Heart left ventricle (tissue), 16 donors: ENCODE measurements at regions of chr4 and their contacts with region 1.

Region 1: GRCh38 chr4:110005461-110006056 is 92.9 kb downstream of the EGF start:
- DNase-seq: no peak
- ATAC-seq: peak in 1 of 4 donors; percentile 61
- H3K4me3 ChIP-seq: no peak overlapping the region
- H3K27ac ChIP-seq: no peak overlapping the region
- H3K4me1 ChIP-seq: peaks cover 0 to 6% (median 0%) of the 10 kb centered on the region in 12 donors
- H3K27me3 ChIP-seq: peaks cover 0 to 5% (median 0%) of the 10 kb centered on the region in 9 donors
- CTCF ChIP-seq: peak; percentile 45 to 77 (median 62)
- POLR2A ChIP-seq: no peak

Region 2: GRCh38 chr4:109850601-109851000 is 155.0 kb before region 1 on chr4:
- intact Hi-C with region 1: no loop called
- DNase-seq: no peak
- ATAC-seq: no peak
- H3K4me3 ChIP-seq: no peak overlapping the region
- H3K27ac ChIP-seq: no peak overlapping the region
- H3K4me1 ChIP-seq: no peaks in the 10 kb centered on the region
- H3K27me3 ChIP-seq: no peaks in the 10 kb centered on the region
- CTCF ChIP-seq: no peak
- POLR2A ChIP-seq: no peak

Region 3: DNA sequence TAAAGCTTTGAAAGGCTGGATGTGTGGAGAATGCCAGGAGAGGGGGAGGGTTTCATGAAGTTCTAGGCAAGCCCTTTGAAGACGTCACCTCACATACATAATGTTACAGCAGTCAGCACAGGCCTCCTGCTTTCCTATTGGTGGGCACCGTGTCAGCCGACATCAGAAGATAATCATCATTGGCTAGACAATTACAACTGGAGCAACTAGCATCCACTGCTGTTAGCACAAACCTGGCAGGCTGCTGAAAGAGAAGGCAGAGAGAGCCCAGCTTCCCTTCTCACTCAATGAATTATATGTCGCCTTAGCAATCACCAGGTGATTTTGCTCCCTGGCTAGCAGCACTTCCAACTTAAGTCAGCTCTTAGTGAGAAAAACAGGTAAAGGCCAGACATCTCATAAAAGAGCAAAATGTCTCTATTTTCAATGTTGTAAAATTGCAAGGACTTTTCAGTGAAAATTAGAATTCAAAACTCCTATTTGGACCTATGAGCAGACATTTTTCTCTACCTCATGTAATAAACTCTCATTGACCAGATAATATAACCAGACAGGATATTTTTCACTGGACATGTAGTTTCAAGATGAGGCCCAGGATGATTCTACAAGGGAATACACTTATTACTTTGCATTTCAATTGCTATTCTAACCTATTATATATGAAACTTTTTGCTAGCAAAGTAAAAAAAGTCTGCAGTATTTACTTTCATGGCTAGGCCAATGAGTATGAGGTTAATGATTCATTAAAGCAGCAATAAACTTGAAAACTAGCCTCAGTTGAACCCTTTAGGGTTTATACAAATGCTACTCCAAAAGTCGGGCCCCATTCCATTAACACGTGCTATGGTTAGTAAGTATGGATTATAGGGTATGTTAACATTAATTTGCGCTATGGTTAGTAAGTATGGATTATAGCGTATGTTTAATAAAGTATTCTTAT is 188.5 kb after region 1 on chr4:
- intact Hi-C with region 1: loop called in 1 of 10 experiments (anchors 5 kb)
- DNase-seq: peak in 4 of 5 donors; percentile 44 to 61 (median 50)
- ATAC-seq: peak in 3 of 4 donors; percentile 14 to 42 (median 29)
- H3K4me3 ChIP-seq: no peak overlapping the region
- H3K27ac ChIP-seq: no peak overlapping the region
- H3K4me1 ChIP-seq: peaks cover 0 to 26% (median 4%) of the 10 kb centered on the region in 12 donors
- H3K27me3 ChIP-seq: no peaks in the 10 kb centered on the region
- CTCF ChIP-seq: no peak
- POLR2A ChIP-seq: no peak

Region 4: DNA sequence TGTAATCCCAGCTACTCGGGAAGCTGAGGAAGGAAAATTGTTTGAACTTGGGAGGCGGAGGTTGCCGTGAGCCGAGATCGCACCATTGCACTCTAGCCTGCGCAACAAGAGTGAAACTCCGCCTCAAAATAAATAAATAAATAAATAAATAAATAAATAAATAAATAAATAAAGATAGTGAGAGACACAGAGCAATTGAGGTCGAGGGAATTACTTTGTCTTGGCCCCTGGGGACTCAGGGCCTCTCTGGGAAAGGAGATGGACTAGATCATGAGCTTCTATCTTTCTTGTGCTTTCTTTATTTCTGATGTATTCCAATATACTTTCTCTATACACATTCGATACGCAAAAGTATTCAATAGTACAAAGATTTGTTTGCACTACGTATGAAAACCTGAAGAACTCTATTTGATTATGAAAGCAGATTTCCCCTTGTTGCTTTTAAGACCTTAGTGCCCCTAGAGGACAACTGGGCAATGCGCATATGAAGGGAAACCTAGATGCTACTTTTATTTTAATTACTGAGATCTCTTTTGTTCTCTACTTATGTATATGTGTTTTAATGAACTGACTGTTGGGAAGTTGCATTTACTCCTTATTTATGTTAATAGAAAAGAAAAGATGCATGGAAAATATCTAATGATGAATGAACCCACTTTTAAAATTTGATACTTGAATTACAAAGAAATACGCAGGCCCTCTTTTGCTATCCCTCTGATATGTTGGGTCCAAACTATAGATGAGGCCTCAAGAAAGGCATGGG is 205.6 kb after region 1 on chr4:
- intact Hi-C with region 1: loop called in 1 of 10 experiments (anchors 5 kb)
- DNase-seq: no peak
- ATAC-seq: peak in 1 of 4 donors; percentile 53
- H3K4me3 ChIP-seq: peak overlapping the region in 2 of 12 donors; percentile 34 to 37
- H3K27ac ChIP-seq: no peak overlapping the region
- H3K4me1 ChIP-seq: no peaks in the 10 kb centered on the region
- H3K27me3 ChIP-seq: no peaks in the 10 kb centered on the region
- CTCF ChIP-seq: peak; percentile 51 to 92 (median 72)
- POLR2A ChIP-seq: no peak

Region 5: GRCh38 chr4:110275871-110276270 is 270.3 kb after region 1 on chr4:
- intact Hi-C with region 1: no loop called
- DNase-seq: no peak
- ATAC-seq: no peak
- H3K4me3 ChIP-seq: no peak overlapping the region
- H3K27ac ChIP-seq: no peak overlapping the region
- H3K4me1 ChIP-seq: no peaks in the 10 kb centered on the region
- H3K27me3 ChIP-seq: no peaks in the 10 kb centered on the region
- CTCF ChIP-seq: no peak
- POLR2A ChIP-seq: no peak

Region 6: DNA sequence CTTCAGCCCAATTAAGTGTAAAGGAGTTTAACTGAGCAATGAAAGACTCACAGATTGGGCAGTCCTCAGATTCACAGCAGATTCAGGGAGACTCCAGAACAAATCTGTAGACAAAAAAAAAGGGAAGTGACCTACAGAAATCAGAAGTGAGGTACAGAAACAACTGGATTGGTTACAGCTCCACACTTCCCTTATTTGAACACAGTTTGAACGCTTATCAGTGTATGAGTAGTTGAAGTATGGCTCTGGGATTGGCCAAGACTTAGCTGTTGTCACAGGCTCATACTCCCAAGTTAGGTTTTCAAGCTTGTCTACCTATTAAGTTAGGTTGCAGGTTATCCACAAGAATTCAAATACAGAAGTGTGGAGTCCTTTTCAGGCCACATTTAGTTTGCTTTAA is 305.2 kb after region 1 on chr4:
- intact Hi-C with region 1: loop called in 2 of 10 experiments (anchors 10 kb)
- DNase-seq: no peak
- ATAC-seq: no peak
- H3K4me3 ChIP-seq: no peak overlapping the region
- H3K27ac ChIP-seq: no peak overlapping the region
- H3K4me1 ChIP-seq: peaks cover 0 to 10% (median 0%) of the 10 kb centered on the region in 12 donors
- H3K27me3 ChIP-seq: no peaks in the 10 kb centered on the region
- CTCF ChIP-seq: no peak
- POLR2A ChIP-seq: no peak